Ascending aorta (tissue), 2 donors: ENCODE measurements at regions of chr3 and their contacts with region 1.

Region 1: GRCh38 chr3:66047311-66048050 is 8.8 kb upstream of the MAGI1 start:
- DNase-seq: peak in 1 of 2 donors; percentile 91
- H3K4me3 ChIP-seq: peak overlapping the region in 1 of 2 donors; percentile 11
- H3K27ac ChIP-seq: peak overlapping the region; percentile 43 to 52
- H3K4me1 ChIP-seq: peaks cover 9 to 10% of the 10 kb centered on the region in 2 donors
- H3K27me3 ChIP-seq: no peaks in the 10 kb centered on the region
- CTCF ChIP-seq: no peak

Region 2: DNA sequence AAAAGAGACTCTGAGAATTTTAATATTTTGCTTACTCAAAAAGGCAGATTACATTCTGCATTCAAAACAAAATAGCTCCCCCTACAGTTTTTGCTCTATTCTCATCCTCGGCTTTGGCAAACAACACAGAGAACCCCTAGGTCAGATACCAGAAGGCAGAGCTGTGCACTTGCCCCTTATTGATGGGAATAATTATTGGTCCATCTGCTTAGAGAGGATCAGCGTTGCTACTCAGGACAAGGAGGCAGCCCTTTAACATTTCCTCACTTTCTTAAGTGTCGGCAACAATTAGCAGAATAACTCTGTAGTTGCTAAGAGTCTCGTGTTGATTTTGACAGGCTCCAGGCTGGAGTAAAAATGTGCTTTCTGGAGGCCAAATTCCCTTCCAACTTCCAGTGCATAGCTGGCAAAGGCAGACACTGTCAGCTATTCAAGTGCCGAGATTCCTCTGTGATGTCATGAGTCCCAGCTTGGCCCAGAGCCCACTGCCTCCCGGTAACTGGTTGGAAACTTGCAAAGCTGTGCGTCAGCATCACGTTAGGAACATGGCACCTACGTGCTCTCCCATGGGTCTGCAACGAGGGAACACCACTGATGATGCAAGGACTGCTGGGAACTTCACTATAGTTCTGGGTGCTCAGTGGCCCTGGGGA is 877.0 kb before region 1 on chr3:
- intact Hi-C with region 1: loop called (anchors 10 kb)
- DNase-seq: peak; percentile 90 to 98
- H3K4me3 ChIP-seq: peak overlapping the region in 1 of 2 donors; percentile 5
- H3K27ac ChIP-seq: peak overlapping the region; percentile 72 to 78
- H3K4me1 ChIP-seq: peaks cover 0 to 6% of the 10 kb centered on the region in 2 donors
- H3K27me3 ChIP-seq: no peaks in the 10 kb centered on the region
- CTCF ChIP-seq: peak in 2 of 3 experiments; percentile 12 to 49

Region 3: DNA sequence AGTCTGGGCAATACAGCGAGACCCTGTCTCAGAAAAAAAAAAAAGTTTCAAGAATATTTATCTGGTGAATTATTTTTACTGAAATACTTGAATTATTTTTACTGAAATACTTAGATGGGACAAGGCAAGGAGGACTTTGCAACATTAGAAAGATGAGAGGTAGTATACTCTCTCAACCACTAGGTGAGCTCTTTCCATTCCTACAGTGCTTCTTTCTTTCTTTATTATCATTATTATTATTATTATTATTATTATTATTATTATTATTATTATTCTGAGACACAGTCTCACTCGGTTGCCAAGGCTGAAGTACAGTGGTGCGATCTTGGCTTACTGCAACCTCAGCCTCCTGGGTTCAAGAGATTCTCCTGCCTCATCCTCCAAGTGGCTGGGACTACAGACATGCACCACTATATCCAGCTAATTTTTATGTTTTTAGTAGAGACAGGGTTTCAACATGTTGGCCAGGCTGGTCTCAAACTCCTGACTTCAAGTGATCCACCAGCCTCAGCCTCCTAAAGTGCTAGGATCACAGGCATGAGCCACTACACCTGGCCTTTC is 477.6 kb before region 1 on chr3:
- intact Hi-C with region 1: no loop called
- DNase-seq: no peak
- H3K4me3 ChIP-seq: no peak overlapping the region
- H3K27ac ChIP-seq: no peak overlapping the region
- H3K4me1 ChIP-seq: peaks cover 0 to 15% of the 10 kb centered on the region in 2 donors
- H3K27me3 ChIP-seq: no peaks in the 10 kb centered on the region
- CTCF ChIP-seq: no peak